Dorsolateral prefrontal cortex (tissue), 120 donors: ENCODE measurements at regions of chr11 and their contacts with region 1.

Region 1: GRCh38 chr11:65817835-65818742 is 15.7 kb upstream of the SNX32 start:
- DNase-seq: peak; percentile 88 to 95 (median 92)
- H3K4me3 ChIP-seq: peak overlapping the region; percentile 48 to 97 (median 73)
- H3K27ac ChIP-seq: peak overlapping the region in 51 of 59 donors; percentile 19 to 91 (median 75)
- H3K27me3 ChIP-seq: no peaks in the 10 kb centered on the region
- CTCF ChIP-seq: peak; percentile 95 to 100 (median 100)

Region 2: DNA sequence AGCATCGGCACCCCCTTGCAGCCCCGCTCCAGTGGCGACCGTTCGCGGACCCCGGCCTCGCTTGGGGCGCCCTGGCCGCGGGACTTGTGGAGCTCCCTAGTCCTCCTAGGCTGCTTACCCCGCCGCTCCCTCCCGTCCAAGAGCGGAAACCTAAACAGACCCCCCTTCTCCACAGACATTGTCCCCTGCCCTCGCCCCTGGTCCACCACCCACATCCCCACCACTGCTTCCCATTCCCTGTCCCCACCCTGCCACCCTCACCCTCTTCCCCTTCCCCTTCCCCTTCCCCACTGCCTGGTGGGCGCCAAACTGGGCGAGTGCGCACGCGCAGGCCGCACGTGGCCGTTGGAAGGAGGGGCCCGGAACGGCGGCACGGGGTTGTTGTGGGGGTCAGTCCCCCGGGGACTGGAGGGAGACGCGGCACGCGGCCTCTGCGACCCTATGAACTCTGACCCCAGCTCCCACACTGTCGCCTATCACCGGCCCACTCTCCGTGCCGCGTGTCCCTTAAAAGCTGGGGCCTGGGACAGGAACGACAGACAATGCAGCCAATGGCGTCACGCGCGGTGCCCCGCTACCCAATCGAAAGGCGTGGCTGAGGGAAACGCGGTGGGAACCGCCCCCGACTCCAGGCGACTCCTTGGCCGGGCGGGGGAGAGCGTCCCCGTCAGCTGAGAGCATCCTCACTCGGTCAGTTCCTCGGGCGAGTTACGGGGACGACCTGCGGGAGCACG is 15.4 kb after region 1 on chr11 and contains the start of gene SNX32:
- intact Hi-C with region 1: loop called in 1 of 2 experiments (anchors 2 kb)
- DNase-seq: peak; percentile 96 to 99 (median 98)
- H3K4me3 ChIP-seq: peak within 1 kb of the TSS; percentile 48 to 91 (median 74)
- H3K27ac ChIP-seq: peak within 1 kb of the TSS in 34 of 59 donors; percentile 11 to 85 (median 62)
- H3K27me3 ChIP-seq: no peaks in the 10 kb centered on the region
- CTCF ChIP-seq: peak in 16 of 56 donors; percentile 7 to 51 (median 30)
- total RNA-seq, gene SNX32: 18.6 to 78.2 (median 41.0) TPM

Region 3: DNA sequence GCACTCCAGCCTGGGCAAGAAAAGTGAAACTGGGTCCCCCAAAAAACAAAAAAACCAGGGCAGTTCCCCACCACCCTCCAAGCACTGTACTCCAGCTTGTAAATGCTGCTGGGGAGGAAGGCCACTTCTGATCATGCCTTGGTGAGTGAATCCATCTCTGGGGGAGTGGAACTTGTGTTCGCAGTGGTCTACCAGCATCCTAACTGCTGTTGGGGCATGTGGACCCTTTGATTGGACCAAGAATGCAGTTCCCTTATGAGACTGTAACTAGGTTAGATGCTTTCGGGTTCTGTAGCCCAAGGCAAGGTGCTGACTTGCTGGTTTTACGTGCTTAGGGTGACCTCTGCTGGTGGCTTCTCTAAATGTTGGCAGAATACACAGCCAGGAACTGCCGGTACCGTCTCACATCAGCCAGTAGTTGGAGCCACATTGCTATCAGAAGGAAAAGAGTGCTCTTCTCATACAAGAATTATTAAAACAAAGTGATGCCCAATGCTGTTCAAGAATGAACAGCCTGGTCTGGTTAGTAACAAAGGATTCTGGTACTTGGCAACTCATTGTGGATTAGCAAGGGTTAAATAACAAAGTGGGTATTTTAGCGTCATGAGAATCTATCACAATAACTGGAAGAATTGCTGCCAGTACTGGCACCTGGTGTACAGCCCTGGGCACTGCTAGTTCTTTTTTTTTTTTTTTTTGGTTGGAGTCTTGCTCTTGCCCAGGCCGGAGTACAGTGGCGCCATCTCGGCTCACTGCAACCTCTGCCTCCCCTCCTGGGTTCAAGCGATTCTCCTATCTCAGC is 170.9 kb after region 1 on chr11:
- intact Hi-C with region 1: loop called in 1 of 2 experiments (anchors 5 kb)
- DNase-seq: peak; percentile 53 to 97 (median 88)
- H3K4me3 ChIP-seq: peak overlapping the region in 4 of 59 donors; percentile 6 to 26 (median 16)
- H3K27ac ChIP-seq: peak overlapping the region in 19 of 59 donors; percentile 0 to 67 (median 37)
- H3K27me3 ChIP-seq: no peaks in the 10 kb centered on the region
- CTCF ChIP-seq: peak; percentile 74 to 99 (median 95)

Region 4: GRCh38 chr11:66089067-66089466 is 271.0 kb after region 1 on chr11:
- intact Hi-C with region 1: no loop called
- DNase-seq: no peak
- H3K4me3 ChIP-seq: no peak overlapping the region
- H3K27ac ChIP-seq: no peak overlapping the region
- H3K27me3 ChIP-seq: no peaks in the 10 kb centered on the region
- CTCF ChIP-seq: no peak